ENCODE measurements at regions of chr3 and their contacts with region 1.

Region 1: GRCh38 chr3:31546162-31546561 is 13.4 kb downstream of the STT3B start:
- H3K4me3 ChIP-seq: no peak overlapping the region
- H3K27ac ChIP-seq: no peak overlapping the region
- H3K4me1 ChIP-seq: peaks cover 9% of the 10 kb centered on the region
- CTCF ChIP-seq: no peak

Region 2: GRCh38 chr3:31521468-31521867 is 24.7 kb before region 1 on chr3:
- CTCF ChIA-PET with region 1: no interaction called
- POLR2A ChIA-PET with region 1: no interaction called
- H3K4me3 ChIP-seq: no peak overlapping the region
- H3K27ac ChIP-seq: no peak overlapping the region
- H3K4me1 ChIP-seq: no peaks in the 10 kb centered on the region
- CTCF ChIP-seq: no peak

Region 3: GRCh38 chr3:31531992-31532586 is 14.1 kb before region 1 on chr3:
- CTCF ChIA-PET with region 1: interaction called, 3 read pairs
- POLR2A ChIA-PET with region 1: interaction called, 19 read pairs
- H3K4me3 ChIP-seq: peak overlapping the region; percentile 95
- H3K27ac ChIP-seq: peak overlapping the region; percentile 87
- H3K4me1 ChIP-seq: no peaks in the 10 kb centered on the region
- CTCF ChIP-seq: peak; percentile 4; the same call in 1 of the 2 replicates

Region 4: GRCh38 chr3:32675164-32675563 is 1129.0 kb after region 1 on chr3:
- CTCF ChIA-PET with region 1: no interaction called
- POLR2A ChIA-PET with region 1: no interaction called
- H3K4me3 ChIP-seq: no peak overlapping the region
- H3K27ac ChIP-seq: no peak overlapping the region
- H3K4me1 ChIP-seq: no peaks in the 10 kb centered on the region
- CTCF ChIP-seq: no peak